ENCODE measurements at regions of chr5 and their contacts with region 1.

Region 1: GRCh38 chr5:99032234-99033013 is 103.6 kb upstream of the CHD1 start:
- DNase-seq: peak; percentile 29
- CTCF ChIP-seq: peak; percentile 81

Region 2: DNA sequence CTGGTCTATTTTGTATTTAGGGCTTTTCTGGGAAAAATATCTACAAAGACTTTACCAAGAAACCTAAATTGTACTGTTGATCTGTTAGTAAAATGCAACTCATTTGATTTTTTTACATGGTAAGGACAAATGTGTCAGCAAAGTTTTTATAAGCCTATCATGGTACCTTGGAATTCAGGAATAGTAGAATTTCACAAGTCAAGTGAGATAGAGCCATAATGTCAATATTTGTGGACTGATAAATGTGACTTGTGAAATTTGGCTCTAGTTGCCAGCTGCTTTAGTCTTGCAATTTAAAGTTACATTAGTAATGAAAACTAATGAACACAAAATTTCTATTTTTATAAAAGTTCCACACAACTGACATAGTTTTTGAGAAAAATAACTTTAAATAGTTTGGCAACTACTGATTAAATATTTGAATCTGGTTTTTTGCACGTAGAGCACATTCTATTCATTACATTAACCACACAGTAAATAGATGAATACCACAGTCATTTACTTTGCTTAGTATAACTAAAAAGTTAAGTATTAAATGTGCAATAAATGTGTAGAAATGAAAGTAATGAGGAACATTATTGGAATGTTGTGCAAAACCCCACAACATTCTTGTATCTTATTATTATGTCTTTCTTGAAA is 1808.2 kb before region 1 on chr5:
- in situ Hi-C with region 1: loop called (anchors 25 kb)
- DNase-seq: no peak
- CTCF ChIP-seq: no peak

Region 3: DNA sequence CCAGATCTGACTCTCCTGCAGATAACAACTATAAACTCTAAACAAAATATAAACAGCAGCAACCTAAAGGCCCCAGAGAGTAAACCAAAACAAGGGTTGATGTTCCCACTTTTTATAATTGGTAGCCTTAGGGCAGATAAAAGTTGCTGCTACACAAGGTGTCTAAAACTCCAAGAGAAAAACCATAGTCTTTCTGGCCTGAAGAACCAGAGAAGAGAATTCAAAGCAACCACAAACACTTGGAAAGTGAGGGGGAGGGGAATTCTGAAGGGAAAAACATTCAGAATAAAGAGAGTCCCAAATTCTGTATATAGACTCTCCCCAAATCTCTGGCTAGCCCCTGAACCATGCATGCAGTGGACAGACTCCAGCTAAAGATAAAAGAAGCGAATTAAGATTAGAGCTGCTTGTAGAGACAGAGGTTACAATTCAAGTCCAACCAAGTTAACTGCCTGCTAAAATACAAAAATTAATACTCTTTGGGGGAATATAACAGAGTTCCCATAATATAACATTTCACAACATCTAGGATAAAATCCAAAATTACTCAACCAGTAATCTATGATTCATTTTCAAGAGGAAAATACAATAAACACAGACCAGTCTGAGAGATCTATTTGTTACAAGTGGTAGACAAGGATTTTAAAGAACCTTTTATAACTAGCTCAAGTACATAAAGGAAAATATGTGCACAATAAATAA is 296.5 kb before region 1 on chr5:
- in situ Hi-C with region 1: no loop called
- DNase-seq: no peak
- CTCF ChIP-seq: no peak

Region 4: GRCh38 chr5:98911280-98912040 is 121.0 kb before region 1 on chr5:
- in situ Hi-C with region 1: loop called (anchors 5 kb)
- DNase-seq: no peak
- CTCF ChIP-seq: no peak

Measured in GM13977 (cell line).